Tibial artery (tissue), 4 donors: ENCODE measurements at regions of chr1 and their contacts with region 1.

Region 1: GRCh38 chr1:100866041-100866900 is 28.4 kb downstream of the EXTL2 start:
- DNase-seq: no peak
- H3K4me3 ChIP-seq: no peak overlapping the region
- H3K27ac ChIP-seq: no peak overlapping the region
- H3K4me1 ChIP-seq: peaks cover 0 to 7% (median 3%) of the 10 kb centered on the region in 4 donors
- H3K27me3 ChIP-seq: no peaks in the 10 kb centered on the region
- CTCF ChIP-seq: peak; percentile 50 to 63

Region 2: DNA sequence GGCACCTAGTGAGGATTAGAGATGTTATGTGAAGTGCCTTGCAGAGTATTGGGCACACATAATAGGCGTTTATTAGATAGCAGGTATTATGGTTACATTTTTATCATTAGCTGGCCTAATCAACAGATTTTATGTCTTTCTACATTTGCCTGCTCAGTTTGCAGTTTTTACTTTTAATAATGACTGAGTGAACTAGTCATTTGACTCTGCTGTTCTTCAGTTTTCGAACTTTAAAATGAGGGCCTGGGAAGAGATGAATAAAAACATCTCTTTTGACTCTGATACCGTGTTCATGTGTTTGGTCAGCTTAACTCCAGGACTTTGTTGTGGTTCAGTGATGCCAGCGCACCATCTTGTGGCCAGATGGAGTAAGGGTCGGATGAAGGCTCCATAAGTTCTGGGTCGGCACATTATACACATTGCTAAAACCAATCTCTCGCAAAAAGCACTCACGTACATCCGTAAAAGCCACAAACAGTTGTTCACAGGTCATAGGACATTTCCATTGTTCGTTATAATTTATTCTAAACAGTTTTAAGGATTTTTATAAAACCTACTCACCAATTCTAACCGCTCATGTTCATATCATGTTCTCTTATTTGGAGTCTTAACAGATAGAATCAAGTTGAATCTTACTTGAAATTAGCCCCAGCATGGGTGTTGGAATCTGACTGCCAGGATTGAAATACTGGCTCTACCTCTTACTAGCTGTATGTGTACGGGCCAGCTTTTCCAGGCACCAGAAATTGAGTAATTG is 406.7 kb before region 1 on chr1:
- intact Hi-C with region 1: loop called (anchors 5 kb)
- DNase-seq: peak; percentile 75 to 80
- H3K4me3 ChIP-seq: no peak overlapping the region
- H3K27ac ChIP-seq: no peak overlapping the region
- H3K4me1 ChIP-seq: peaks cover 0 to 5% (median 2%) of the 10 kb centered on the region in 4 donors
- H3K27me3 ChIP-seq: no peaks in the 10 kb centered on the region
- CTCF ChIP-seq: peak; percentile 79 to 83

Region 3: DNA sequence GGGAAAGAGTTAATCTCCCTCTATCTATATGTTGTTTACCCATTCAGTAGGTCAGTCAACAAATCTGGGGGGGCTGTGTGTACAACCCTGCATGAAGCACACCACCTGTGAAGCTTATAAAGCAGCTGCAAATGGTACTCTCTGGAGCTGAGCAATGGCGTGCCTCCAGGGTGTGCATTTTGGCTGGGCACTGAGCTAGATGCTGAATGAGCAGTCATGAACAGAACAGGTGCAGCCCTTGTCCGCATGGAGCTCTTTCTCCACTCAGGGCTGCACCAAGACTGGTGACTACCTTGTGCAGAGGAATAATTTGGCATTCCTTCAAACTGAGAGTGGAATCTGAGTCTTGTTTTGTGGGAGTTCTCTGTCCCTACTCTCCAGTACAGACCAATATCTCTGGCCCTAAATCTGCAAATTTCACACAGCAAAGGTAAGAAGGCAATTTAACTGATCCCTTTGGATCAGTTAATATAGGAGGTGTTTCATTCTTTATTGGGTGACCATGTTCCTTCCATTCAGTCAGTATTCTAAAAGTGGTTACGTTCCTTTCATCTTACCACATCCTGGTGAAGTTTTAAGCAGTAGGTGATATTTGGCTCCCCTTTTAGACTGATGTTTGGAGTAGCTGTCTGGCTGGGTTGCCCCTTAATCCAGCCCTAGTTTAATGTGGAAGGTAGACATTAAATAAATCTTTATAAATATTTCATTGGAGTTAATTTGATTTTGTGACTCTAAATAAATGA is 252.3 kb before region 1 on chr1:
- intact Hi-C with region 1: loop called (anchors 10 kb)
- DNase-seq: no peak
- H3K4me3 ChIP-seq: no peak overlapping the region
- H3K27ac ChIP-seq: no peak overlapping the region
- H3K4me1 ChIP-seq: peaks cover 0 to 16% (median 0%) of the 10 kb centered on the region in 4 donors
- H3K27me3 ChIP-seq: no peaks in the 10 kb centered on the region
- CTCF ChIP-seq: no peak

Region 4: GRCh38 chr1:100657876-100658715 is 208.2 kb before region 1 on chr1:
- intact Hi-C with region 1: no loop called
- DNase-seq: no peak
- H3K4me3 ChIP-seq: no peak overlapping the region
- H3K27ac ChIP-seq: no peak overlapping the region
- H3K4me1 ChIP-seq: no peaks in the 10 kb centered on the region
- H3K27me3 ChIP-seq: no peaks in the 10 kb centered on the region
- CTCF ChIP-seq: no peak